HepG2 (cell line): ENCODE measurements at regions of chr6 and their contacts with region 1.

Region 1: DNA sequence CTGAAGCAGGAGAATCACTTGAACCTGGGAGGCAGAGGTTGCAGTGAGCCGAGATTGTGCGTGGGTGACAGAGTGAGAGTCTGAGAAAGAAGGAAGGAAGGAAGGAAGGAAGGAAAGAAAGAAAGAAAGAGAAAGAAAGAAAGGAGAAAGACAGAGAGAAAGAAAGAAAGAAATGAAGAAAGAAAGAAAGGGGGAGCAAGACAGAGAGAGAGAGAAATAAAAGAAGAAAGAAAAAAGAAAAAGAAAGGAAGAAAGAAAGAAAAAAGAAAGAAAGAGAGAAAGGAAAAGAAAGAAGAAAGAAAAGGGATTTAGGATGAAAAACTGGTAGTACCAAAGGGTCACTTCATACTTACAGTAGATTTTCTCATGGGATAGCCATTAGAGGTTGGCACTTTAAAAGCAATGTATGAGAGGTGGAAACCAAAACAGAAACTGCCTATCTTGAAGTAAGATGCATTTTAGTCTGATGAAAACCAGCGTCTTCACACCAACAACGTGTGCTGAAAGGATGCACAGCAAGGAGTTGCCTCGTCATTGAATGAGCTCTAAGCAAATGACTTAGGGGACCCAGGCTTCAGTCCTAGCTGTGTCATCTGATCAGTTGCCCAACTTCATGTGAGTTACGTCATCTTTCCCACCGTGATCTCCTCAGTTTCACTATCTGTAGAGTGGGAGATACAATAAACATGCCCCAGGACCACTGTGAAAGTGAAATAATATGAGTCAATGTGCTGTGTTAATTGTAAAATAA is 133.9 kb upstream of the NEDD9 start:
- DNase-seq: no peak
- ATAC-seq: no peak
- H3K4me3 ChIP-seq: no peak overlapping the region
- H3K27ac ChIP-seq: peak overlapping the region; percentile 94
- H3K4me1 ChIP-seq: peaks cover 77% of the 10 kb centered on the region
- H3K27me3 ChIP-seq: no peaks in the 10 kb centered on the region
- CTCF ChIP-seq: no peak
- EP300 ChIP-seq: no peak; a peak in 1 of 4 replicates
- POLR2A ChIP-seq: no peak
- RAD21 ChIP-seq: no peak; the same call in 1 of the 2 replicates

Region 2: DNA sequence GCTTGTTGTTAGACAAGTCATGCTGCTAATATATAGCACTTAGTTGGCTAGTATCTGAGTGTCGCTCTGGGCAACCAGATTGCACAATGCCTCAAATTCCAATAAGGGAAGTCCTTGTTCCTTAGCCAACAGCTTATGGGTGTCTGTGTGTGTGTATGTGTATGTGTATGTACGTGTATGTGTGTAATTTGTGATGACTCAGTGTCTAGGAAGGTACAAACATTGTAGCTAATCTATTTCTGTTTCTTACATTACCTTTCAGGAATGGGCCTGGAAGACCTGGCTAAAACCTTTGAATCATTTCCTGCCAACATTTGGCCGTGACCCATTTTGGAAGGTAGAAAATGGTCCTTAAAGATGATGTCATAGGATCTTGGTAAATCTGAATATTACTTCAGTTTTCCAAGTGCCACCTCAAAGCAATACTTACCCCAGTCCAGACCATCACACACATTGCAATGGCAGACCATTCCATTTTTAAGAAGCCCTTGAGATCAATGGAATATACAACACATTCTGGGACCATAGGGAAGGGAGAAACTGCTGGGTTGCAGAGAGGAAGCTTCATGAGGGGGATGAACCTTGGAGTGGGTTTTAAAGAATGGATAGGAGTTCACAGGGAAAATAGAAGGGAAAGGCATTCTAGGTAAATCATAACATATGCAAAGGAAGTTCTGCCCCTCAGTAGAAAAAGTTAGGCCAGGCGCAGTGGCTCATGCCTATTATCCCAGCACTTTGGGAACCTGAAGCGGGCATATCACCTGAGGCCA is 159.0 kb before region 1 on chr6:
- CTCF ChIA-PET with region 1: no interaction called
- POLR2A ChIA-PET with region 1: interaction called, 25 read pairs
- in situ Hi-C with region 1: no loop called
- intact Hi-C with region 1: no loop called
- DNase-seq: peak; percentile 98
- ATAC-seq: peak; percentile 53
- H3K4me3 ChIP-seq: no peak overlapping the region
- H3K27ac ChIP-seq: peak overlapping the region; percentile 68
- H3K4me1 ChIP-seq: peaks cover 100% of the 10 kb centered on the region
- H3K27me3 ChIP-seq: no peaks in the 10 kb centered on the region
- CTCF ChIP-seq: no peak
- EP300 ChIP-seq: peak; percentile 78 to 88
- POLR2A ChIP-seq: no peak; a peak in 1 of 4 replicates
- RAD21 ChIP-seq: no peak

Region 3: GRCh38 chr6:11298651-11299420 is 67.5 kb before region 1 on chr6:
- CTCF ChIA-PET with region 1: no interaction called
- POLR2A ChIA-PET with region 1: interaction called, 22 read pairs
- in situ Hi-C with region 1: no loop called
- intact Hi-C with region 1: loop called (anchors 1 kb)
- DNase-seq: peak; percentile 98
- ATAC-seq: peak; percentile 98
- H3K4me3 ChIP-seq: peak overlapping the region in 2 of 3 experiments; percentile 15 to 61; a peak in 2 of 6 replicates
- H3K27ac ChIP-seq: peak overlapping the region; percentile 90
- H3K4me1 ChIP-seq: peaks cover 44% of the 10 kb centered on the region
- H3K27me3 ChIP-seq: no peaks in the 10 kb centered on the region
- CTCF ChIP-seq: peak; percentile 17; the same call in 1 of the 2 replicates
- EP300 ChIP-seq: peak; percentile 92 to 94
- POLR2A ChIP-seq: peak; percentile 9 to 49; a peak in 1 of 4 replicates
- RAD21 ChIP-seq: peak; percentile 42

Region 4: GRCh38 chr6:11392778-11393507 is 26.6 kb after region 1 on chr6:
- CTCF ChIA-PET with region 1: no interaction called
- POLR2A ChIA-PET with region 1: interaction called, 37 read pairs
- in situ Hi-C with region 1: no loop called
- intact Hi-C with region 1: loop called (anchors 2 kb)
- DNase-seq: peak; percentile 100
- ATAC-seq: peak; percentile 85
- H3K4me3 ChIP-seq: peak overlapping the region in 1 of 3 experiments; percentile 39; a peak in 2 of 6 replicates
- H3K27ac ChIP-seq: peak overlapping the region; percentile 98
- H3K4me1 ChIP-seq: peaks cover 97% of the 10 kb centered on the region
- H3K27me3 ChIP-seq: no peaks in the 10 kb centered on the region
- CTCF ChIP-seq: peak; percentile 17; the same call in 1 of the 2 replicates
- EP300 ChIP-seq: peak; percentile 89 to 100
- POLR2A ChIP-seq: peak; percentile 63 to 66; a peak in 3 of 4 replicates
- RAD21 ChIP-seq: no peak

Region 5: GRCh38 chr6:11428895-11429294 is 62.5 kb after region 1 on chr6:
- CTCF ChIA-PET with region 1: no interaction called
- POLR2A ChIA-PET with region 1: interaction called, 12 read pairs
- in situ Hi-C with region 1: no loop called
- intact Hi-C with region 1: no loop called
- DNase-seq: peak; percentile 80
- ATAC-seq: peak; percentile 70
- H3K4me3 ChIP-seq: no peak overlapping the region; a peak in 1 of 6 replicates
- H3K27ac ChIP-seq: peak overlapping the region; percentile 71
- H3K4me1 ChIP-seq: peaks cover 100% of the 10 kb centered on the region
- H3K27me3 ChIP-seq: no peaks in the 10 kb centered on the region
- CTCF ChIP-seq: no peak
- EP300 ChIP-seq: peak in 1 of 2 experiments; percentile 72; a peak in 1 of 4 replicates
- POLR2A ChIP-seq: no peak
- RAD21 ChIP-seq: no peak

Region 6: DNA sequence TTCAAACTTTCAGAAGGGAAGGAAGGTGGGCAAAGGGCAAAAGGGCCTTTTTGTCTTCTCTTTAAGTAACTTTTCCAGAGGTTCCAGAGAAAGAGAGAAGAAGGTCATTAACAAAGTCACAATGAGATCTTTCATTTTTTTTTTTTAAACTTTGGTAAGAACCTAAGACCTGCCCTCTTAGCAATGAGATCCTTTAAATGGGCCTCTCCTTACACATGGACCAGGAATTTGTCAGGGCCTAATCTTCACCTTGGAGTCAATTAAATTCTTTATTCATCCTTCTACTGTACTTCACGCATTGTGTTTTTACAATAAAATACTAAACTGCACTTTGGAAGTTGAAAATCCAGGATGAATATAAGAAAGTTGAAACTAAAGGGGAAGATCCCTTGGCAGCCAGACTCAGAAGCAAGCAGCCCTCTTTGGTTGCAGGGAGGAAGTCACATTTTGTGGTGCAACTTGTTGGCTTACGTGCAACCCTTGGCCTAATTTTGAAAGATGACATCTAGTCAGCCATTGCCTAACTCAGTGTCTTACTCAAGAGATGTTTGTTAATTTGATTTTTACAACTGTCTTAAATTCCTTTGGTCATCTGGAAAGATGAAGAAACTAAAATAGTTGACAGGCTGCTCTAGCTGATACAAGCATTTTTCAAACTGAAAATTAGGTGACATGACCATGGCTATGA is 159.3 kb after region 1 on chr6:
- CTCF ChIA-PET with region 1: no interaction called
- POLR2A ChIA-PET with region 1: no interaction called
- in situ Hi-C with region 1: no loop called
- intact Hi-C with region 1: no loop called
- DNase-seq: no peak
- ATAC-seq: no peak
- H3K4me3 ChIP-seq: no peak overlapping the region
- H3K27ac ChIP-seq: no peak overlapping the region
- H3K4me1 ChIP-seq: no peaks in the 10 kb centered on the region
- H3K27me3 ChIP-seq: peaks cover 0 to 5% of the 10 kb centered on the region in 2 experiments; a peak in 1 of 5 replicates
- CTCF ChIP-seq: no peak
- EP300 ChIP-seq: no peak
- POLR2A ChIP-seq: no peak
- RAD21 ChIP-seq: no peak